ENCODE measurements at regions of chr10 and their contacts with region 1.

Region 1: DNA sequence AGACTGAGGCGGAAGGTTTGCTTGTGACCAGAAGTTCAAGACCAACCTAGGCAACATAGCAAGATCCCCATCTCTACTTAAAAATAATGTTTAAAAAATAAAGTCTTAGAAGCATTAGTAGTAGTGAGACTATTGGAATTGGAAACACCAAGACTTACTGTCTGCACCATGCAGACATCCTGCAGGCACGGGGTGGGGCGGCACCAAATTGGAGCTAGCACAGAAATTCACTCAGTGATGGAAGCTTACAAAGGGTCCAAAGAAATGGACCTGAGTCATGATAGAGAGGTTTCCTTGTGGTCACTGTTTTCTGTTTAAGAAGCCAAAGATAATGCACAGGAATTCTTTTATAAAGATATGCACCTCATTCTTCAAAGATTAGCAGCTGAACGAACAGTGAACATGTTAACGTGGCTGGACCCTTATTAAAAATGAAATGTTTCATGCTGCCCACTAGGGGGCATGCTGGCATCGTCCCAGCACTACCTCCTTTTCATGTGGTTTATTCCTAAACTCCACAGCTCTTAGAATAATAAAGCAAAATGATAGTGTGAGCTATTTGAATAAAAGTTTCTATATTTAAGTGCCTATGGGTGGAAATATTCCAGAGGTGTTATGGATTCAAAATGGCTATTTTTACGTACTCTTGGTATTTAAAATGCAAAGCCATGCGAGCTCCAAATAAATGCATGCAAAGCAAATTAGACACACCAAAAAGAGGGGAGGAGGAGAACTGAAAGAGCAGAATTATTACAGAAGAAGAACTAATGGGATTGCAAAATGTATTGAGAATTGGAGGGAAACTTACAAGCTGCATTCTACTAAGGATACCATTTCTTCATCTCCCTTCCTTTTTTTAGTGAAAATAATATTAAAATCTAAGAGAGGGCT is 28.6 kb downstream of the PDSS1 start:
- ATAC-seq: peak; percentile 60 to 91 (median 72)
- H3K4me3 ChIP-seq: no peak overlapping the region
- H3K27ac ChIP-seq: no peak overlapping the region
- H3K4me1 ChIP-seq: no peaks in the 10 kb centered on the region

Region 2: DNA sequence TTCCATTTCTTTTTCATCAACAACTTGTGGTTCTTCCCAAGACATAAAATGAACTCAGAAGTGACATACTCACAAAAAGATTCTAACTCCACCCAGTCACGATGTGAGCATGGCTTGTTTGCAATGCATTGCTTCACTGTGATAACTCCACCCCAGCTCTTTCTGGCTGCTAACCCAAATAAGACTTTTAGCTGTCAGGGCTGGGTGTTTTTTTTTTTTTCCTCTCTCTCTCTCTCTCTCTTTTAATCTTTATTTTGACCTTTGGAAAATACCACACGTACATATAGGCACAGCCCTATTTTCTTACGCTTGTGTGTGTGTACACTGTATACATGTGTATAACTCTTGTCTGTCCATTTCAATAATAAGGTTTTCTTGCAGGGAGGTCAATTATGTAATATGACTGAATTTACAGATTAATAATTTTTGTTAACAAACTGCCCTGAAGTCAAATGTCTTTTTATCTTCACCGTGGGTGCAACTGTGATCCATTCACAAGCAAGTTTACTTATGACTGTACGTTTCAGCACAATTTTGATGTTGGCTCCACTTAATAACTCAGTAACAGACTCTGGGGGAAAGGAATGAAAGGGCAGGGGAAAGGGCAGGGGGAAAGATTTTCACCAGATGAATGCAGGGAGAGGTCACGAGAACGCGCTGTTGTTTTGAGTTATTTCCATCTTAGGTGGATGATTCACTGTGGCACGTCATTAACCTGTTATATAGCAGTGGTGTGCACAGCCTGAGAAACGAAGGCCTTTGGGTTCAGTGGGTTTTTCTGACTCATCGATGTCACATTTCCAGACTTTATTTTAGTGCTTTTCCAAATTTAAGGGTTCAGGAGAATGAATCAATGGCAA is 238.9 kb before region 1 on chr10:
- in situ Hi-C with region 1: no loop called
- ATAC-seq: peak; percentile 45 to 93 (median 88)
- H3K4me3 ChIP-seq: no peak overlapping the region
- H3K27ac ChIP-seq: no peak overlapping the region
- H3K4me1 ChIP-seq: peaks cover 0 to 13% of the 10 kb centered on the region in 2 donors

Region 3: DNA sequence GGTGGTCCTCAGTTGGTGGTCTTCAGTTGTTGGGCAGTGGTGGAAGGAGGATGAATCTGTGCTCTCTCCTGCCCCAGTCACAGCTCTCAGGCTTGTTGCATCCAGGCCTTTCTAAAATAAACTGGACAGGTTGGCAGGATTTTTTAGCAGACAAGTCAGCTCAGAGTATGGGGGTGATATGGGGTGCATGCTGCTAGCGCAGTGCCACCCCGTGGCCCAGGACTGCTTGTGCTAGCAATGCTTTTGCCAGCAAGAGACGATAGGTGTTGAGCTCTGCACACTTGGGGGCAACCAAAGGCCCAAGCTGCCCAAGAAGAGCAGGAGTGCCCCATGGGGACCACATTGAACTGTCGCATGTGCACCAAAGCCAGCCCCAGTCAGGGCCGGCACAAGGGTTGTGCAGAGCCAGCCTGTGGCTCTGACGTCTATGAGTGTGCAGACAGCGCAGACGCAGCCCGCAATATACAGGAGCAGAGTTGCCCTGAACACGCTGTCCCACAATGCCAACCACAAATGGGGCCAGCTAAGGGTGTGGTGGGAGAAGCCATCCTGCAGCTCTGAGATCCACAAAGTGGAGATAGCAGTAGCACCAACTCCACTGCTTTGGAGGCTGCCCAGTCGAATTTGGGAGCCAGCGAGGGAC is 78.4 kb before region 1 on chr10:
- in situ Hi-C with region 1: no loop called
- ATAC-seq: no peak
- H3K4me3 ChIP-seq: no peak overlapping the region
- H3K27ac ChIP-seq: no peak overlapping the region
- H3K4me1 ChIP-seq: no peaks in the 10 kb centered on the region

Region 4: DNA sequence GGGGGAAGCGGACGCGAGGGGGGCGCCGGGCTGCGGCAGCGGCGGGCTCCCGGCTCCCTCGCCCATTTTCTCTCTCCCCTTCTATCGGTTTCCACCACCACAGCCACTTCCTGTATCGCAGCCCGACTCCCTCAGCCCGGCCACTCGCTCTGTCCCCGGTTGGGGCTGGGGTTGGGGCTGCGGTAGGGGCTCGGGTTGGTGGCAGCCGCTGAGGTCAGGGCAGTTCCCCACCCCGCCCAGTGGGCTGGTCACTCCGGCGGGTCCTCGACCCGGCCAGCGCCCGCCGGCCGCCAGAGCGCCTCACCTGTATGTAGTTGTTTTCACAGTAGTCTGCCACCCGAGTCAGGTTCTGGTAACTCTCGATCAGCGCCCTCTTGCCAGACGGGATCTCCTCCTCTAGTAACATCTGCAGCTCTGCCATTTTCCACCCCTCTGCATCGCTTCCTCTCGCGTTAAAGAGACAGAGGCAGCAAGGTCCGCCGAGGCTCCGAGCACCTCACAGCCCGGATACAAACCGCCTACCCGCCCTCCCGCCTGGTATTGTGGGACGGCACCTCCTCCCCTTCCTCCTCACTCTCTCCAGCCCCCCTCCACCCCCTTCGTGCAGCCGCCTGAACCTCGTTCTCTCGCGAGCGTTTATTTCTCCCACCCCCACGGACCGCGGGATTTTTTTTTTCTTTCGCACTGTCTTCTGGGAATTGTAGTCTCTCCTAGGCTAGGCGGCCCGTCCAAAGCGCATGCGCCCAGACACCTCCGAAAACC is 134.5 kb after region 1 on chr10 and contains the start of gene ABI1:
- in situ Hi-C with region 1: loop called in 7 of 9 experiments (anchors 25 kb)
- ATAC-seq: peak; percentile 80 to 95 (median 91)
- H3K4me3 ChIP-seq: peak within 1 kb of the TSS; percentile 66 to 95 (median 74)
- H3K27ac ChIP-seq: peak within 1 kb of the TSS; percentile 77 to 82
- H3K4me1 ChIP-seq: peaks cover 4 to 6% of the 10 kb centered on the region in 2 donors
- total RNA-seq, gene ABI1: 21.6 to 54.7 (median 23.8) TPM

Region 5: GRCh38 chr10:26879740-26880139 is 153.7 kb after region 1 on chr10:
- in situ Hi-C with region 1: loop called in 8 of 9 experiments (anchors 10 to 25 kb)
- ATAC-seq: peak in 2 of 8 experiments; percentile 57 to 86
- H3K4me3 ChIP-seq: no peak overlapping the region
- H3K27ac ChIP-seq: no peak overlapping the region
- H3K4me1 ChIP-seq: no peaks in the 10 kb centered on the region